Thyroid gland (tissue), 4 donors: ENCODE measurements at regions of chr22 and their contacts with region 1.

Region 1: GRCh38 chr22:19717691-19718455 is 3.6 kb downstream of the SEPTIN5 start:
- DNase-seq: peak; percentile 68 to 74
- H3K4me3 ChIP-seq: peak overlapping the region in 1 of 3 donors; percentile 36
- H3K27ac ChIP-seq: peak overlapping the region in 1 of 3 donors; percentile 15
- H3K4me1 ChIP-seq: peaks cover 15 to 31% of the 10 kb centered on the region in 2 donors
- H3K27me3 ChIP-seq: no peaks in the 10 kb centered on the region
- CTCF ChIP-seq: peak; percentile 43 to 99 (median 98)
- POLR2A ChIP-seq: no peak

Region 2: GRCh38 chr22:19679522-19680101 is 38.3 kb before region 1 on chr22:
- intact Hi-C with region 1: loop called (anchors 2 kb)
- DNase-seq: peak; percentile 56 to 61
- H3K4me3 ChIP-seq: no peak overlapping the region
- H3K27ac ChIP-seq: no peak overlapping the region
- H3K4me1 ChIP-seq: no peaks in the 10 kb centered on the region
- H3K27me3 ChIP-seq: no peaks in the 10 kb centered on the region
- CTCF ChIP-seq: peak; percentile 73 to 91 (median 80)
- POLR2A ChIP-seq: no peak

Region 3: DNA sequence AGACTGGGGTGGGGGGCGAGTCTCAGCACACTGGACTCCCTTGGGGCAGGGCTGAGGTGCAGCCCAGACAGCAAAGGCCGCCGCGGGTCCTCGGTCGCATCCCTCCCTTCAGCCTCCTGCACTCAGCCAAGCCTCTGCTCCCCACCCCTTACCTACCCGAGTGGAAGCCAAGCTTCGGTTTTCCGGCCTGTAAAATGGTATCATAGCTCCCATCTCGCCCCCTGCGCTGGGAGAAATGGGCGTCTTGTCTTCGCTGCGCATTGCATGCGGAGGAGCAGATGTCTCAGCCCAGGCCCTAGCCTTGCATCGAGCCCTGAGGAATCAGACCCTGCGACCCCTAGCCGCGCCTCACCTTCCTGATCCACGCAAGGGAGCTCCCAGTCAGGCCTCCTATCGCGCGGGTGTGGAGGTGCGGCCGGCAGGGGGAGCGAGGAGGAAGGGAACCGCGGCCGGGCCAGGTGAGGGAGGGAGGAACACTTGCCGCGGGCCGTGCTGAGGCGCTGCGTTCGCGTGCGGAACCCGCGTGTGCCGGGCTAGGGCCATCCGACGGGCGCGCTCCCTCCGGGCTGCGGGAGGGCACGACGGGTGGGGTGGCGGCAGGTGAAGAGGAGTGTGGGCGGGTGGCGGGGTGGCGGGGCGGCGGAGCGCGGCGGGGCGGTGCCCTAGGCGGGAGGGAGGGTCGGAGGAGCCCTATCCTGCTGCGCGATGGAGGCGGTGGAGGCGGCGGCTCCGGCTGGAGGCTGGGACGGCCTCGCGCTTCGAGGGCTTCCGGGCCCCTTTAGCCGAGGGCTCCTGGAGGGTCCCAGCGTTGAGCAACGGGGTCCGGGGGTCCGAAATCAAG is 38.6 kb after region 1 on chr22:
- intact Hi-C with region 1: no loop called
- DNase-seq: peak; percentile 63 to 67
- H3K4me3 ChIP-seq: no peak overlapping the region
- H3K27ac ChIP-seq: no peak overlapping the region
- H3K4me1 ChIP-seq: peaks cover 16 to 33% of the 10 kb centered on the region in 2 donors
- H3K27me3 ChIP-seq: peaks cover 32% of the 10 kb centered on the region
- CTCF ChIP-seq: peak in 5 of 6 experiments; percentile 47 to 65 (median 57)
- POLR2A ChIP-seq: no peak